H1 (cell line): ENCODE measurements at regions of chr11 and their contacts with region 1.

Region 1: GRCh38 chr11:79076526-79077115 is 364.2 kb downstream of the TENM4 start:
- DNase-seq: no peak
- H3K4me3 ChIP-seq: no peak overlapping the region
- H3K27ac ChIP-seq: no peak overlapping the region
- H3K4me1 ChIP-seq: peaks cover 2 to 11% (median 4%) of the 10 kb centered on the region in 4 experiments
- H3K27me3 ChIP-seq: no peaks in the 10 kb centered on the region
- CTCF ChIP-seq: peak; percentile 68 to 76 (median 68)
- EP300 ChIP-seq: no peak
- POLR2A ChIP-seq: no peak
- RAD21 ChIP-seq: peak; percentile 60 to 66

Region 2: DNA sequence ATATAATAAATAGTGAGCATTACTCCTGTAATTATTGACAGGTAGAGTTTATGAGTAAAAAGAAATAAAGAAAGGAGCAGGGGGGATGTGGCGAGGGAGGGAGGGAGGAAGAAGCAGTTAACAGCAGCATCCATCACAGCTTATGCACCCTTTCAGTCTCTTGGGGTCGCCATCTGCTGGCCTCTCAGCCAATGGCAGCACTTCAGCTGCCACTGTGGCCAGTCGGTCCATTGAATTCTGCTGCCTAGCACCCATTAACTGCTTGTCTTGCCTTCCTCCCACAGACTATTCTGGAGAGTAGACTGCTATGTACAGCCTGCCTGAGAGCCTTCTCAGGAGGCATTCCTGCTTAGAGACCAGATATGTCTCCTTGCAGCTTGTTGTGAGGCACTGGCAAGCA is 24.1 kb before region 1 on chr11:
- CTCF ChIA-PET with region 1: interaction called, 18 read pairs
- POLR2A ChIA-PET with region 1: no interaction called
- DNase-seq: no peak
- H3K4me3 ChIP-seq: no peak overlapping the region
- H3K27ac ChIP-seq: no peak overlapping the region
- H3K4me1 ChIP-seq: no peaks in the 10 kb centered on the region
- H3K27me3 ChIP-seq: no peaks in the 10 kb centered on the region
- CTCF ChIP-seq: peak; percentile 33 to 66 (median 50)
- EP300 ChIP-seq: no peak
- POLR2A ChIP-seq: no peak
- RAD21 ChIP-seq: peak; percentile 44 to 49

Region 3: GRCh38 chr11:79062814-79063762 is 13.5 kb before region 1 on chr11:
- CTCF ChIA-PET with region 1: interaction called, 28 read pairs
- POLR2A ChIA-PET with region 1: no interaction called
- DNase-seq: peak; percentile 31 to 64
- H3K4me3 ChIP-seq: no peak overlapping the region
- H3K27ac ChIP-seq: no peak overlapping the region
- H3K4me1 ChIP-seq: peaks cover 9 to 29% (median 14%) of the 10 kb centered on the region in 4 experiments
- H3K27me3 ChIP-seq: no peaks in the 10 kb centered on the region
- CTCF ChIP-seq: peak; percentile 42 to 55 (median 45)
- EP300 ChIP-seq: no peak
- POLR2A ChIP-seq: no peak
- RAD21 ChIP-seq: peak; percentile 40 to 56

Region 4: GRCh38 chr11:79087238-79087960 is 10.8 kb after region 1 on chr11:
- CTCF ChIA-PET with region 1: interaction called, 28 read pairs
- POLR2A ChIA-PET with region 1: interaction called, 4 read pairs
- DNase-seq: peak in 1 of 2 experiments; percentile 29
- H3K4me3 ChIP-seq: no peak overlapping the region
- H3K27ac ChIP-seq: no peak overlapping the region
- H3K4me1 ChIP-seq: peaks cover 8 to 21% (median 15%) of the 10 kb centered on the region in 4 experiments
- H3K27me3 ChIP-seq: no peaks in the 10 kb centered on the region
- CTCF ChIP-seq: no peak
- EP300 ChIP-seq: no peak
- POLR2A ChIP-seq: no peak
- RAD21 ChIP-seq: no peak